AG04450 (cell line): ENCODE measurements at regions of chr11 and their contacts with region 1.

Region 1: GRCh38 chr11:102007567-102008437 is 39.4 kb upstream of the CFAP300 start:
- DNase-seq: peak; percentile 4
- H3K4me3 ChIP-seq: no peak overlapping the region
- H3K27ac ChIP-seq: no peak overlapping the region
- H3K27me3 ChIP-seq: no peaks in the 10 kb centered on the region
- CTCF ChIP-seq: peak; percentile 45

Region 2: DNA sequence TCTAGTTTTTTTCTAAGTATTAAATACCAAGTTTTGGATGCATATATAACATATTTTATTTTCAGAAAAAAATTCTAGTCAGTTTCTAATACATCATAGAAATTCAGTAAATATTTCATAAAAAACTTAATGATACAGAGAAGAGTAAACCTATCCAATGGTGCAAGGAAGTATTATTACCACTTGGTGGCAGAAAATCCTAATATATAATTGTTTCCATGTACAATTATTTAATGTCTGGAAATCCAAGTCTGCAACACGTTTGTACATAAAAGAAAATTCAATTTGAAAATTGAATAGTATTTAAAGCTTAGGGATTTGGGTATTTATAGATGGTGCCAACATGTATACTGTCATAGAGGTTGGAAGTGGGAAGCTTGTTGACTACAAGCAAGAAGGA is 551.0 kb before region 1 on chr11:
- CTCF ChIA-PET with region 1: interaction called, 23 read pairs
- POLR2A ChIA-PET with region 1: no interaction called
- DNase-seq: no peak
- H3K4me3 ChIP-seq: no peak overlapping the region
- H3K27ac ChIP-seq: no peak overlapping the region
- H3K27me3 ChIP-seq: no peaks in the 10 kb centered on the region
- CTCF ChIP-seq: peak; percentile 46

Region 3: DNA sequence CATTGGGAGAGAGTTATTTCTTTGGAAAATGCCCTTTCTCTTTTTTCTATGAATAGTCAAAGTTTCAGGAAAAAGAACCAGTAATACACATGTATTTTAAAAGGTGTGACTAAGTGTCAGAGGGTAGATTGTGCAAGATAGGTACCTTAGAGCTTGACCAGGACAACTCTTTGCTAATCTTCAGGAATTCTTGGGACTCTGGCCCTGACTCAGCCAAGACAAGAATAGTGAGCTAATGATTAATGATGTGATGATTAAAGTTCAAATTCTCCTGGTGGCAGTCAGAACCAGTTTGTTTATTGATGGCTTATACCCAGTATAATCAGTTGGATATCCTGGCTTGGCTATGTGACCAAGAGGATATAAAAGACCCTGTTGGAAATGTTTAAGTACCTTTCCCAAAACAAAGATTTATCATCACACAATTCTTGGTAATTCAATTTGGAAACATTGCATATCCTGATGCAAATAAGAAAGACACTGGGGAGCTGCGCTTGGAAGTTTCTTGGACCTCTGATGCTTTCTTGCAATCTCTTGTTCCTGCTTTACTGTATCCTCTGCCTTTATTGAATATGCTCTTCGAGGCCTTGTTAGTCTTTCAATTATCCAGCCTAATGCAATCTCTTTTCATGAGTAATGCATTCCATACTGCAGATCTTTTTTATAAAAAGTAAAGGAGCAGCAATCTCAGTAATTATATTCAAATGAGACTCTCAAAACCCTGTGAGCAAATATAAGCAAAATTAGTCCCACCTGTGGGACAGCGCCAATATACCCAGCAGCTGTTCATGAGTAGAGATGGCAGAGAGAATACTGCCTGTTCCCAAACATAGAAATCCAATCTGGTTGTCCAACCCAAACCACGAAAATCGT is 140.9 kb before region 1 on chr11:
- CTCF ChIA-PET with region 1: interaction called, 370 read pairs
- POLR2A ChIA-PET with region 1: interaction called, 4 read pairs
- DNase-seq: no peak
- H3K4me3 ChIP-seq: no peak overlapping the region
- H3K27ac ChIP-seq: no peak overlapping the region
- H3K27me3 ChIP-seq: no peaks in the 10 kb centered on the region
- CTCF ChIP-seq: no peak

Region 4: DNA sequence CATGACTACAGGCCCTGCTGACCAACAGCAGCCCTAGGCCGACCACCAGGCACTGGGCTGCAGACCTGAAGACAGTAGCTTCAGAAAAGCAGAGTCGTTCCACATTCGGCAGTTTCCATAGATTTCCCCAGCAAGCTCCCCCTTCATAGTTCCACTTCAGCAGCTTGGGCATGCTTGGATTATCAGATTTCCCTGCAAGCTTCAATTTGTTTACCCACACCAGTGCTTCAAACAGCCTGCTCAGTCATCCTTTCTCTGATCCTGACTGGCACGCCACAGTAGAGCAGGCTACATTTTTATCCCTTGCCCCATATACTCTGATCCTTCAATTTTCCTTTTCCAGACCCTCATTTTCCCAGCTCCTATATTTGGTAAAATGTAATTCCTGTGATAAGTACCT is 11.7 kb before region 1 on chr11:
- CTCF ChIA-PET with region 1: interaction called, 27 read pairs
- POLR2A ChIA-PET with region 1: no interaction called
- DNase-seq: no peak
- H3K4me3 ChIP-seq: no peak overlapping the region
- H3K27ac ChIP-seq: no peak overlapping the region
- H3K27me3 ChIP-seq: no peaks in the 10 kb centered on the region
- CTCF ChIP-seq: no peak

Region 5: DNA sequence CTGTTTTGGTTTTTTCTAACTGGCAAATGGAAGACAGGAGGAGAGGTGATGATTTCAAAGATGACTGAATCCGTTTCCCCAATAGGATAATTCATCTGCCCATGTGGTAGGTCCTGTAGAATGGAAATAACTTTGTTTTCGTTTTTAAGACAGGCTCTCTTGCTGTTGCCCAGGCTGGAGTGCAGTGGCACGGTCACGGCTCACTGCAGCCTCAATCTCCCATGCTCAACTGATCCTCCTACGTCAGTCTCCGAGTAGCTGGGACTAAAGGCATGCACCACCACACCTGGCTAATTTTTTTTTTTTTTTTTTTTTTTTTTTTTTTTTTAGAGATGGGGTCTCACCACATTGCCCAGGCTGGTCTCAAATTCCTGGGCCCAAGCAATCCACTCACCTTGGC is 232.1 kb after region 1 on chr11:
- CTCF ChIA-PET with region 1: no interaction called
- POLR2A ChIA-PET with region 1: no interaction called
- DNase-seq: no peak
- H3K4me3 ChIP-seq: no peak overlapping the region
- H3K27ac ChIP-seq: no peak overlapping the region
- H3K27me3 ChIP-seq: no peaks in the 10 kb centered on the region
- CTCF ChIP-seq: no peak